GM12878 (cell line): ENCODE measurements at regions of chr12 and their contacts with region 1.

Region 1: GRCh38 chr12:44015335-44015941 is 179.6 kb downstream of the TMEM117 start:
- DNase-seq: peak; percentile 32
- ATAC-seq: peak; percentile 87
- H3K4me3 ChIP-seq: no peak overlapping the region
- H3K27ac ChIP-seq: no peak overlapping the region
- H3K4me1 ChIP-seq: no peaks in the 10 kb centered on the region
- H3K27me3 ChIP-seq: no peaks in the 10 kb centered on the region
- CTCF ChIP-seq: peak; percentile 41 to 75 (median 61); a peak in 5 of 6 replicates
- EP300 ChIP-seq: no peak
- POLR2A ChIP-seq: no peak
- RAD21 ChIP-seq: peak; percentile 87

Region 2: GRCh38 chr12:43957732-43958372 is 57.6 kb before region 1 on chr12:
- CTCF ChIA-PET with region 1: interaction called, 18 read pairs
- POLR2A ChIA-PET with region 1: no interaction called
- RAD21 ChIA-PET with region 1: interaction called, 5 read pairs
- SMC1A ChIA-PET with region 1: interaction called, 7 read pairs
- in situ Hi-C with region 1: no loop called
- intact Hi-C with region 1: loop called (anchors 5 kb)
- DNase-seq: peak; percentile 28
- ATAC-seq: peak; percentile 89
- H3K4me3 ChIP-seq: no peak overlapping the region
- H3K27ac ChIP-seq: no peak overlapping the region
- H3K4me1 ChIP-seq: no peaks in the 10 kb centered on the region
- H3K27me3 ChIP-seq: no peaks in the 10 kb centered on the region
- CTCF ChIP-seq: peak; percentile 33 to 79 (median 56); a peak in 5 of 6 replicates
- EP300 ChIP-seq: no peak
- POLR2A ChIP-seq: no peak
- RAD21 ChIP-seq: peak; percentile 77

Region 3: GRCh38 chr12:44076871-44077270 is 61.4 kb after region 1 on chr12:
- CTCF ChIA-PET with region 1: no interaction called
- POLR2A ChIA-PET with region 1: no interaction called
- RAD21 ChIA-PET with region 1: no interaction called
- SMC1A ChIA-PET with region 1: no interaction called
- in situ Hi-C with region 1: no loop called
- intact Hi-C with region 1: no loop called
- DNase-seq: no peak
- ATAC-seq: no peak
- H3K4me3 ChIP-seq: no peak overlapping the region
- H3K27ac ChIP-seq: no peak overlapping the region
- H3K4me1 ChIP-seq: no peaks in the 10 kb centered on the region
- H3K27me3 ChIP-seq: no peaks in the 10 kb centered on the region
- CTCF ChIP-seq: no peak
- EP300 ChIP-seq: no peak
- POLR2A ChIP-seq: no peak
- RAD21 ChIP-seq: no peak

Region 4: DNA sequence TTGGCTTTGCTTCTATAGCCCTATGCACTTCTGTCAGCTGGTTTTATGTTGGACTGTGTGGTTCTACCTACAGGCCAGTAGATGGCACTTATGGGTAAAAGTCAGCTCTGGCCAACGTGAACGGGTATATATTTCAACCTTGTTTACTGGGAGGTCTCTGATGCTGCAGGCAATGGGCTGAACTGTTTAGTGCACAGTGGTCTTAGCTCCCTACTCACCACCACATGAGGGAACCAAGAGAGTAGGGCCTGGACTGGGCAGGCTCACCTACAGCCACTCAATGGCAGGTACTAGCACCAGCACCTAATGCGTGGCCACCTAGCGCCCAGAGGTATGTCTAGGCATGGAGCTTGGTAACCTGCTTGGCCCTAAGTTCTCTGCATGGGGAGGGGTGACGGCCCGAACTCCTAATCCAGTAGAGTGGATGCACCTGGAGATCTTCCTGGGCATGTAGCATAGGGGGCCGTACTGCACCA is 302.3 kb after region 1 on chr12:
- CTCF ChIA-PET with region 1: interaction called, 12 read pairs
- POLR2A ChIA-PET with region 1: no interaction called
- RAD21 ChIA-PET with region 1: interaction called, 4 read pairs
- SMC1A ChIA-PET with region 1: interaction called, 5 read pairs
- in situ Hi-C with region 1: no loop called
- intact Hi-C with region 1: loop called (anchors 5 kb)
- DNase-seq: no peak
- ATAC-seq: peak; percentile 93
- H3K4me3 ChIP-seq: no peak overlapping the region
- H3K27ac ChIP-seq: no peak overlapping the region
- H3K4me1 ChIP-seq: no peaks in the 10 kb centered on the region
- H3K27me3 ChIP-seq: no peaks in the 10 kb centered on the region
- CTCF ChIP-seq: peak; percentile 51 to 57 (median 55); a peak in 5 of 6 replicates
- EP300 ChIP-seq: no peak
- POLR2A ChIP-seq: no peak
- RAD21 ChIP-seq: peak; percentile 89

Region 5: GRCh38 chr12:44509471-44509870 is 494.0 kb after region 1 on chr12:
- CTCF ChIA-PET with region 1: interaction called, 12 read pairs
- POLR2A ChIA-PET with region 1: no interaction called
- RAD21 ChIA-PET with region 1: no interaction called
- SMC1A ChIA-PET with region 1: interaction called, 3 read pairs
- in situ Hi-C with region 1: no loop called
- intact Hi-C with region 1: loop called (anchors 10 kb)
- DNase-seq: no peak
- ATAC-seq: no peak
- H3K4me3 ChIP-seq: no peak overlapping the region
- H3K27ac ChIP-seq: no peak overlapping the region
- H3K4me1 ChIP-seq: no peaks in the 10 kb centered on the region
- H3K27me3 ChIP-seq: no peaks in the 10 kb centered on the region
- CTCF ChIP-seq: no peak
- EP300 ChIP-seq: no peak
- POLR2A ChIP-seq: no peak
- RAD21 ChIP-seq: no peak

Region 6: GRCh38 chr12:44774815-44775411 is 759.5 kb after region 1 on chr12:
- CTCF ChIA-PET with region 1: interaction called, 5 read pairs
- POLR2A ChIA-PET with region 1: no interaction called
- RAD21 ChIA-PET with region 1: interaction called, 6 read pairs
- SMC1A ChIA-PET with region 1: interaction called, 7 read pairs
- in situ Hi-C with region 1: no loop called
- intact Hi-C with region 1: loop called (anchors 2 kb)
- DNase-seq: no peak
- ATAC-seq: peak; percentile 63
- H3K4me3 ChIP-seq: no peak overlapping the region
- H3K27ac ChIP-seq: no peak overlapping the region
- H3K4me1 ChIP-seq: no peaks in the 10 kb centered on the region
- H3K27me3 ChIP-seq: no peaks in the 10 kb centered on the region
- CTCF ChIP-seq: peak; percentile 66 to 85 (median 82)
- EP300 ChIP-seq: no peak
- POLR2A ChIP-seq: no peak
- RAD21 ChIP-seq: peak; percentile 61

Region 7: GRCh38 chr12:44947163-44947562 is 931.7 kb after region 1 on chr12:
- CTCF ChIA-PET with region 1: interaction called, 13 read pairs
- POLR2A ChIA-PET with region 1: no interaction called
- RAD21 ChIA-PET with region 1: interaction called, 3 read pairs
- SMC1A ChIA-PET with region 1: interaction called, 6 read pairs
- in situ Hi-C with region 1: no loop called
- intact Hi-C with region 1: loop called (anchors 5 kb)
- DNase-seq: no peak
- ATAC-seq: no peak
- H3K4me3 ChIP-seq: no peak overlapping the region
- H3K27ac ChIP-seq: no peak overlapping the region
- H3K4me1 ChIP-seq: no peaks in the 10 kb centered on the region
- H3K27me3 ChIP-seq: no peaks in the 10 kb centered on the region
- CTCF ChIP-seq: no peak
- EP300 ChIP-seq: no peak
- POLR2A ChIP-seq: no peak
- RAD21 ChIP-seq: no peak